ENCODE measurements at regions of chr12 and their contacts with region 1.

Region 1: DNA sequence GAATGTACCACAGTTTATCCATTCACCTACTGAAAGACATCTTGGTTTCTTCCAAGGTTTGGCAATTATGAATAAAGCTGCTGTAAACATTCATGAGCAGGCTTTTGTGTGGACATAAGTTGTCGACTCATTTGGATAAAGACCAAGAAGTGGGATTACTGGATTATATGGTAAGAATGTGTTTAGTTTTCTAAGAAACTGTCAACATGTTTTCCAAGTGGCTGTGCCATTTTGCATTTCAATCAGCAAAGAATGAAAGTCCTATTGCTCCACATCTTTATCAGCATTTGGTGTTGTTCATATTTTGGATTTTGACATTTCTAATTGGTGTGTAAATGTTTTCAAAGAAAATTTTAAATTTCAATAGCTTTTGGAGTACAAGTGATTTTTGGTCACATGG is 27.3 kb upstream of the KLRF1 start:
- DNase-seq: no peak
- CTCF ChIP-seq: no peak

Region 2: GRCh38 chr12:9750276-9751203 is 49.4 kb before region 1 on chr12:
- in situ Hi-C with region 1: loop called (anchors 5 kb)
- DNase-seq: peak; percentile 40
- CTCF ChIP-seq: peak; percentile 67